Caco-2 (cell line): ENCODE measurements at regions of chr20 and their contacts with region 1.

Region 1: GRCh38 chr20:956330-956951 is 40.3 kb upstream of the ANGPT4 start:
- DNase-seq: peak; percentile 77 to 81
- H3K4me3 ChIP-seq: no peak overlapping the region
- H3K4me3 Mint-ChIP-seq: no peak overlapping the region
- H3K27ac Mint-ChIP-seq: no peak overlapping the region
- H3K4me1 ChIP-seq: no peaks in the 10 kb centered on the region
- H3K4me1 Mint-ChIP-seq: no peaks in the 10 kb centered on the region
- H3K27me3 ChIP-seq: no peaks in the 10 kb centered on the region
- H3K27me3 Mint-ChIP-seq: peaks cover 17% of the 10 kb centered on the region
- CTCF ChIP-seq: peak; percentile 94 to 99

Region 2: DNA sequence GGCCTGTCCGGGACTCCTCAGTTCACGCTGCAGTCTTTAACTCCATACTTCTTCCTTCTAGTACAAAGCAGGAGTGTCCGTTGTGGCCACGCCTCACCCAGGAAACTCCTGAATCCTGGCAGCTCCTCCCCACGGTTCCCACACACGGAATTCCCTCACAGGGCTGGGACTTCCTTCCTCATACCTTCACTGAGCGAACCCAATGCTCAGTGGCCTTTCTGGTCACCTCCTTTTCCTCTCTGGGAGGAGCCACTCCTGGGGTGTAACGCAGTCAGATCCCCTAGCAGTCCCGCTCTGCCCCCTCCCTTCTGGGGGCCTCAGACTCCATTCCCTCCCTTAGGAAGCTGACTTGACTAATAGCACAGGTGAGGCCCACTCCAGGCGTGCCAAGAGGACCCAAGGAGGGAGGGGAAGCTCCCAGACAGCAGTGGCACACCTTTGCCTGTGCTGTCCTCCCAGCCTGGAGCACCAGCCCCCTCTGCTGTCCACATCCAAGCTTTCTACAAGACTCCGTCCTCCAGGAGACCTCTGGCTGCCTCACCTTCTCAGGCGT is 187.9 kb before region 1 on chr20 and contains the start of gene SLC52A3:
- CTCF ChIA-PET with region 1: interaction called, 10 read pairs
- POLR2A ChIA-PET with region 1: no interaction called
- intact Hi-C with region 1: no loop called
- DNase-seq: peak; percentile 59 to 81
- H3K4me3 ChIP-seq: no peak within 1 kb of the TSS
- H3K4me3 Mint-ChIP-seq: no peak within 1 kb of the TSS
- H3K27ac Mint-ChIP-seq: no peak within 1 kb of the TSS
- H3K4me1 ChIP-seq: no peaks in the 10 kb centered on the region
- H3K4me1 Mint-ChIP-seq: peaks cover 14% of the 10 kb centered on the region
- H3K27me3 ChIP-seq: no peaks in the 10 kb centered on the region
- H3K27me3 Mint-ChIP-seq: peaks cover 4% of the 10 kb centered on the region
- CTCF ChIP-seq: peak; percentile 12 to 48
- total RNA-seq, gene SLC52A3: 0.50 and 0.56 TPM in 2 replicates

Region 3: DNA sequence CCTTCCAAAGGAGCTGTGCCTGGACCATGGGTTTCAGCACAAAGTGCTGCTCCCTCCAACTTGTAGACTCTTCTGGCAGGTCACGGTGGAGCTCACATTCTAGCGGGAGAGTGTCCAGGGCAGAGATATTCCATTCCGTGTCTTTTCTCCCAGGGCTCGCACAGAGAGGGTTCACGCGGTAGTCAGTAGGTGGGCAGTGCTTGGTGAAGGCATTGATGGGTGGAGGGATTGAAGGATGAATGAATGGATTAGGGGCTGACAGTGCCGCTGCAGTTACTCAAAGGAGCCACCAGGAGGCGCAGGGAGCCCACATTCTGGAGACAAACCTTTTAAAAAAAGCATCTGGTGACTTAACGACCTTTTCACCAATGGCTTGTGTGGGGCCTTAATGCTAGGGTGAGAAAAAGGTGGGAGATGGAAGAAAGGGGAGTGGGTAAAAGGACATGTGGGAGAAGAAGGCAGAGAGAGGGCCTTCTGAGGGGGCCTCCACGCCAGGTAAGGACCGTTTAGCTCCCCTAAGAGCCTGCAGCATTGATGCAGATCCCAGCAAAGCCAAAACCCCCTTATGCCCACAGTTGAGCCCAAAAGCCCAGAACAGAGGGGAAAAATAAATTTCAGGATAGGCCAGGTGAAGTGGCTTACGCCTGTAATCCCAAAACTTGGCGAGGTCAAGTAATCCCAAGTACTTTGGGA is 140.4 kb before region 1 on chr20:
- CTCF ChIA-PET with region 1: interaction called, 31 read pairs
- POLR2A ChIA-PET with region 1: no interaction called
- intact Hi-C with region 1: loop called (anchors 1 kb)
- DNase-seq: peak; percentile 73 to 75
- H3K4me3 ChIP-seq: no peak overlapping the region
- H3K4me3 Mint-ChIP-seq: no peak overlapping the region
- H3K27ac Mint-ChIP-seq: no peak overlapping the region
- H3K4me1 ChIP-seq: peaks cover 11% of the 10 kb centered on the region
- H3K4me1 Mint-ChIP-seq: peaks cover 8% of the 10 kb centered on the region
- H3K27me3 ChIP-seq: no peaks in the 10 kb centered on the region
- H3K27me3 Mint-ChIP-seq: no peaks in the 10 kb centered on the region
- CTCF ChIP-seq: peak; percentile 97 to 98

Region 4: DNA sequence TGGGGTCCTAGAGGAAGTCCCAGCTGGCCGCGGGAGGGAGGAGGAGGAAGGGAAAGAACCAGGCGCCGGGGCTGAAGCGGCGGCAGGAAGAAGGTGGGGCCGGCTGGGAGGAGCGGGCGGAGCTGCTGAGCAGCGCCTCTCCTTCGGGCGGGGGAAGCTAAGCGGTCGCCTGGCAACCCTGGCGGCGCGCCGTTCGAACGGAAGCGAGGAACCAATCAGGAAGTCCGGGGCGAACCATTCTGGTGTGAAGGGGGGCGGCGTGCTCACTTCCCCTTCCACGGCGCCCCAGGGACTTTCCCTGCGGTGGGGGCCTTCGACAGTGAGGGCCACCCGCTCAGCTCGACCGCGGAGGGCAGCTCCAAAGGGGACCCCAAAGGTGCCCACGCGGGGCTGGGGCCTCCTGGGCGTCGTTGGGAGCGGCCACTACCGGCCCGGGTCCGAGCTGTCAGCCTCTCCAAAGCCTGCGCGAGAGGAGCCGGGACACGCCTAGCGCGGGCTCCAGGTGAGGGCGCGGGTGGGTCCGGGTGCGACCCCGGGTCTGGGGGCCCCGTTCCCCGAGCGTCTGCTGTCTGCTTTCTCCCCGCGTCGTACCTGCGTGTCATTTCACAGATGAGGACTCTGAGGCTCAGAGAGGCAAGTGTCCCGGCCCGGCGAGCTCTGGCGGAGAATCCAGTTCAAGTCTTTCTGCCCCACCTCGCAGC is 122.8 kb before region 1 on chr20 and contains the start of gene FAM110A:
- CTCF ChIA-PET with region 1: interaction called, 11 read pairs
- POLR2A ChIA-PET with region 1: no interaction called
- intact Hi-C with region 1: no loop called
- DNase-seq: peak; percentile 95 to 96
- H3K4me3 ChIP-seq: peak within 1 kb of the TSS; percentile 71
- H3K4me3 Mint-ChIP-seq: peak within 1 kb of the TSS; percentile 91
- H3K27ac Mint-ChIP-seq: peak within 1 kb of the TSS; percentile 36
- H3K4me1 ChIP-seq: peaks cover 16% of the 10 kb centered on the region
- H3K4me1 Mint-ChIP-seq: peaks cover 12% of the 10 kb centered on the region
- H3K27me3 ChIP-seq: no peaks in the 10 kb centered on the region
- H3K27me3 Mint-ChIP-seq: no peaks in the 10 kb centered on the region
- CTCF ChIP-seq: no peak
- total RNA-seq, gene FAM110A: 13.8 and 18.4 TPM in 2 replicates

Region 5: DNA sequence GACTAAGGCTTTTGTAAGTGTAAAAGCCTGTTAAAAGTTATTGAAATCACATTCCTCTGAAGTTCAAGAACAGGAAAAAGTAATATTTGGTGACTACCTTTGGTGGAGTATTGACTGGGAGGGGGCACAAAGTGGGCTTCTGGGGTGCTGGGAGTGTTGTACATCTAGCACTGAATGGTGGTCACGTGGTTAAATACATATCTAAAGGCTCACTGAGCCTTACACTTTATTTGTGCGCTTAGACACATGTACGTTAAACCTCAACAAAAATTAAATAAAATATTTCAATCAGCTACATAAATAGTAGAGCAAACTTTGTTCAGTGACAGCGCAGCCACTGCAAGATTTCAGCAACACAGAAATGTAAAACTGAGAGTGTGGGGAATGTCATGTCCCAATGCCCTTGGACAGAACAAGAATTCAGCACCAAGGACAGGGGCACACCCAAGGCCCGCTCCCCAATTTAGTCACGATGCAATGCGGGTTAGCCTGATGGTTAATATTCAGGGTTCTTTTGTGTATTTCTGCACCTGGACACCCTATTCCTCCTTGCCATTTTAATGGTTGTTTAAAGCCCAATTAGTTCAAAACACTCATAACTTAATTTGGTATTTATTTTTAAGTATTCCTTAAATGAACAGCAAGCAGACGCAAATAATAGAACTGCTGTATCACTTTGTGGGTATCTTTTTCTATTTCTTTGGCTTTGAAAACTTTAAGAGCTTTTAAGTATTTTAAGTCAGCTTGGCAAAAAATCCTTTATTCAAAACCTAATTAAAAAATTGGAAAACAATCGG is 77.7 kb before region 1 on chr20:
- CTCF ChIA-PET with region 1: no interaction called
- POLR2A ChIA-PET with region 1: no interaction called
- intact Hi-C with region 1: loop called (anchors 10 kb)
- DNase-seq: peak; percentile 50 to 79
- H3K4me3 ChIP-seq: no peak overlapping the region
- H3K4me3 Mint-ChIP-seq: no peak overlapping the region
- H3K27ac Mint-ChIP-seq: no peak overlapping the region
- H3K4me1 ChIP-seq: no peaks in the 10 kb centered on the region
- H3K4me1 Mint-ChIP-seq: no peaks in the 10 kb centered on the region
- H3K27me3 ChIP-seq: no peaks in the 10 kb centered on the region
- H3K27me3 Mint-ChIP-seq: peaks cover 3% of the 10 kb centered on the region
- CTCF ChIP-seq: no peak

Region 6: DNA sequence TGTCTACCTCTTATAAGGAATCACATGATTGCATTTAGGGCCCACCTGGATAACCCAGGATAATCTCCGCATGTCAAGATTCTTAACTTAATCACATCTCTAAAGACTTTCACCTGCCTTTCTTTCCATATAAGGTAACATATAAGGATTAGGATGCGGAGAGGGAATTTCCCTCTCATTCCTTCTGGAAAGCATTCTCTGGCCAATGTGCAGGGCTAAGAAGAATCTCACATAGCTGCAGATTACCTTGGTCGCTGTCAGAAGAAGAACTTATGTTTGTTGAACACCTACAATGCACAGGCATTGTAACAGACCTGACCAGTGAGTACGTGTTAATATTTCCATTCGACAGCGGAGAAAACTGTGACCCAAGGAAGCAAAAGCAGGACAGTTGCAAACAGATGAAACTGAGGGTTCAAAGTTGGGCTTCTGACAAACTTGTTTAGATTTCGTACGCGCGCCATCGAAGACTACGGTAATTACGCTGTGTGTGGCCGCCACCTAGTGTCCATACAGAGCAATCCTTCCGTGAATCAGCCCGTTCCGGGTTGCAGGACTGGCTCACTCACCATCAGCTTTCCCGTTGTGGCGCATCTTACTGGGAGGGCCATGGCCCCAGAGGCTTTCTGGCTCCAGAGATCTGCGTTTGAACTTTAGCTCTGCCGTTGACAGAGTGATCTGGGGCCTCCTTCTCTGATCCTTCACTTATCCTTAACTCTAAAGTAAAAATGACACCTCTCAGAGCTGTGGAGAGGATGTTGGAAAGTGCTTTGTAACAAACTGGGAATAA is 256.4 kb after region 1 on chr20:
- CTCF ChIA-PET with region 1: no interaction called
- POLR2A ChIA-PET with region 1: no interaction called
- intact Hi-C with region 1: loop called (anchors 10 kb)
- DNase-seq: peak; percentile 78 to 79
- H3K4me3 ChIP-seq: no peak overlapping the region
- H3K4me3 Mint-ChIP-seq: no peak overlapping the region
- H3K27ac Mint-ChIP-seq: no peak overlapping the region
- H3K4me1 ChIP-seq: 0 out of 2 replicates have a peak, but pooled peaks cover 3% of the 10 kb centered on the region
- H3K4me1 Mint-ChIP-seq: no peaks in the 10 kb centered on the region
- H3K27me3 ChIP-seq: no peaks in the 10 kb centered on the region
- H3K27me3 Mint-ChIP-seq: peaks cover 7% of the 10 kb centered on the region
- CTCF ChIP-seq: peak; percentile 83 to 86